ENCODE measurements at regions of chr1 and their contacts with region 1.

Region 1: DNA sequence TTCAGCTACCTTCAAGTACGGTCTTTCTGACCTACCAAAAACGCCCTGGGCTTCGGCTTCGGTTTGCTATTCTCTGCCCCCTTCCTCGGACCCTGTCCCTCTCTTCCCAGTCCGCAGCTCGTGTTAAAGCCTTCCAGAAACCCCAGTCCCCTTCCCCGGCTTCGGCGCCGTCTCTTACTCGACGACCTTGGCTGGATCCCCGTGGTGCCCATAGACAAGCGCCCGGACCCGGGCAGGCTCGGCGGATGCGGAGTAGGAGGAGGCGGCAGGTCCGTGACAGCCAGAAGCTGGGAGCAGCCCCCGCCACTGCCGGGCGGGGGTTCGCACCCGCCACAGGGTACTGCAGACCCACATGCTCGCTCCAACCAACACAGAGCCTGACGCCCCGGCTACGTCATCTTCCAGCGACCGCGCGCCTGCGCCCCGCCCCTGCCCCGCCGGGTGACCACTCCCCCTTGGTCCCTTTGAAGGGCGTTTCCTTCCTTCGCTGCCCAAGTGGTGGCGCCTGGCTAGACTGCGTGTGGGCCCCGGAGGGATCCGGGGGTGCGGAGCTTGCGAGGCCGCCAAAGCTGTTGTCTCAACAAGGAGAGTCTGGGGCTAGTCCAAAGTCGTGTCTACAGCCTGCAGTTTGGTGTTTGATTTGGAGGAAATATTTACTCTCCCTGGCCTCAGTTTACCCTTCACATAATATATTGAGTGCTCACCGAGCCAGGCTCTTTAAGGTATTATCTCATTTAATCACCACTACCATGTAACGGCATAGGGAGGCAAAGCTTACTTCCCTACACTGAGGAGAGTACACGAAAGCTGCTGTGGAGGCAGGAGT is at the start of gene MECR:
- DNase-seq: peak; percentile 94
- ATAC-seq: peak; percentile 97 to 99 (median 98)
- H3K4me3 ChIP-seq: peak within 1 kb of the TSS; percentile 63 to 93 (median 77)
- H3K27ac ChIP-seq: peak within 1 kb of the TSS in 9 of 10 donors; percentile 43 to 83 (median 71)
- H3K4me1 ChIP-seq: peaks cover 6 to 21% (median 13%) of the 10 kb centered on the region in 9 donors
- H3K27me3 ChIP-seq: peaks cover 0 to 8% (median 0%) of the 10 kb centered on the region in 7 donors
- CTCF ChIP-seq: peak in 6 of 9 donors; percentile 7 to 47 (median 29)
- total RNA-seq, gene MECR: 27.8 to 45.6 (median 38.7) TPM

Region 2: GRCh38 chr1:29171089-29171488 is 59.7 kb before region 1 on chr1:
- intact Hi-C with region 1: no loop called
- DNase-seq: no peak
- ATAC-seq: peak in 2 of 8 donors; percentile 9 to 44
- H3K4me3 ChIP-seq: no peak overlapping the region
- H3K27ac ChIP-seq: peak overlapping the region in 2 of 10 donors; percentile 9 to 32
- H3K4me1 ChIP-seq: peaks cover 6 to 74% (median 45%) of the 10 kb centered on the region in 9 donors
- H3K27me3 ChIP-seq: no peaks in the 10 kb centered on the region
- CTCF ChIP-seq: no peak

Region 3: GRCh38 chr1:29703596-29704370 is 473.0 kb after region 1 on chr1:
- intact Hi-C with region 1: loop called in 2 of 10 experiments (anchors 10 kb)
- DNase-seq: no peak
- ATAC-seq: no peak
- H3K4me3 ChIP-seq: no peak overlapping the region
- H3K27ac ChIP-seq: no peak overlapping the region
- H3K4me1 ChIP-seq: peaks cover 0 to 15% (median 0%) of the 10 kb centered on the region in 9 donors
- H3K27me3 ChIP-seq: peaks cover 0 to 56% (median 40%) of the 10 kb centered on the region in 7 donors
- CTCF ChIP-seq: peak; percentile 6 to 67 (median 57)

Region 4: GRCh38 chr1:30085811-30086770 is 855.3 kb after region 1 on chr1:
- intact Hi-C with region 1: loop called in 4 of 10 experiments (anchors 5 to 10 kb)
- DNase-seq: peak; percentile 41 to 68
- ATAC-seq: peak; percentile 38 to 63 (median 42)
- H3K4me3 ChIP-seq: peak overlapping the region in 5 of 10 donors; percentile 14 to 25 (median 19)
- H3K27ac ChIP-seq: peak overlapping the region in 1 of 10 donors; percentile 80
- H3K4me1 ChIP-seq: peaks cover 13 to 54% (median 30%) of the 10 kb centered on the region in 9 donors
- H3K27me3 ChIP-seq: peaks cover 0 to 30% (median 16%) of the 10 kb centered on the region in 7 donors
- CTCF ChIP-seq: peak; percentile 49 to 74 (median 66)

Region 5: GRCh38 chr1:30379684-30380624 is 1149.2 kb after region 1 on chr1:
- intact Hi-C with region 1: loop called in 6 of 10 experiments (anchors 5 to 10 kb)
- DNase-seq: peak in 1 of 2 donors; percentile 69
- ATAC-seq: peak; percentile 59 to 80 (median 68)
- H3K4me3 ChIP-seq: no peak overlapping the region
- H3K27ac ChIP-seq: no peak overlapping the region
- H3K4me1 ChIP-seq: peaks cover 0 to 9% (median 3%) of the 10 kb centered on the region in 9 donors
- H3K27me3 ChIP-seq: peaks cover 0 to 42% (median 34%) of the 10 kb centered on the region in 7 donors
- CTCF ChIP-seq: peak; percentile 76 to 89 (median 85)

Region 6: GRCh38 chr1:30911046-30911954 is 1680.5 kb after region 1 on chr1:
- intact Hi-C with region 1: loop called in 1 of 10 experiments (anchors 10 kb)
- DNase-seq: peak; percentile 87 to 90
- ATAC-seq: peak; percentile 68 to 88 (median 79)
- H3K4me3 ChIP-seq: no peak overlapping the region
- H3K27ac ChIP-seq: peak overlapping the region in 1 of 10 donors; percentile 85
- H3K4me1 ChIP-seq: peaks cover 3 to 61% (median 20%) of the 10 kb centered on the region in 9 donors
- H3K27me3 ChIP-seq: peaks cover 0 to 27% (median 0%) of the 10 kb centered on the region in 7 donors
- CTCF ChIP-seq: peak; percentile 77 to 94 (median 89)

Measured in heart right ventricle (tissue), 16 donors.